ENCODE measurements at regions of chr19 and their contacts with region 1.

Region 1: DNA sequence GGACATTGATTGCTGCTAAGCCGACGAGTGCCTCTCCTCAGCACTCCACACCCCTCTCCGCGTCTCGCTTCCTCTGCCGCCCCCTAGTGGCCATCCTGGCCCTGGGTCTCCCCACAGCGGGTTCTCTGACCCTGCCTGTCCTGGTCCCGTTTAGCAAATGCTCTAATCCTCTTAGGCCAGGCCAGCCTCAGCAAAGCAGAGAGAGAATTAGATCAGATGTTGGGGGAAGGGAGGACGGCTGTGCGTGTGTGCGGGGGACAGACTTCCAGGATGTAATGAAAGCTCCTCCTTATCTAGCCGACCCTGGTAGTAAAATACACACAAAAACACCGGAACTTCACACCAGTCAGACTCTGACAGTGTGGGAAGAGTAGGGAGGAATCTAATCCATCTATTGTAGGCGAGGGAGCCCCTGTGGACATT is 4.5 kb downstream of the TPRX2 start:
- DNase-seq: peak; percentile 65
- H3K4me3 ChIP-seq: no peak overlapping the region
- H3K27ac ChIP-seq: no peak overlapping the region
- H3K4me1 ChIP-seq: no peaks in the 10 kb centered on the region
- H3K27me3 ChIP-seq: no peaks in the 10 kb centered on the region
- CTCF ChIP-seq: peak; percentile 92 to 97
- POLR2A ChIP-seq: no peak

Region 2: GRCh38 chr19:47704024-47704423 is 159.5 kb before region 1 on chr19:
- CTCF ChIA-PET with region 1: no interaction called
- POLR2A ChIA-PET with region 1: no interaction called
- dilution Hi-C with region 1: no loop called
- intact Hi-C with region 1: no loop called
- DNase-seq: no peak
- H3K4me3 ChIP-seq: no peak overlapping the region
- H3K27ac ChIP-seq: no peak overlapping the region
- H3K4me1 ChIP-seq: no peaks in the 10 kb centered on the region
- H3K27me3 ChIP-seq: no peaks in the 10 kb centered on the region
- CTCF ChIP-seq: no peak
- POLR2A ChIP-seq: no peak

Region 3: DNA sequence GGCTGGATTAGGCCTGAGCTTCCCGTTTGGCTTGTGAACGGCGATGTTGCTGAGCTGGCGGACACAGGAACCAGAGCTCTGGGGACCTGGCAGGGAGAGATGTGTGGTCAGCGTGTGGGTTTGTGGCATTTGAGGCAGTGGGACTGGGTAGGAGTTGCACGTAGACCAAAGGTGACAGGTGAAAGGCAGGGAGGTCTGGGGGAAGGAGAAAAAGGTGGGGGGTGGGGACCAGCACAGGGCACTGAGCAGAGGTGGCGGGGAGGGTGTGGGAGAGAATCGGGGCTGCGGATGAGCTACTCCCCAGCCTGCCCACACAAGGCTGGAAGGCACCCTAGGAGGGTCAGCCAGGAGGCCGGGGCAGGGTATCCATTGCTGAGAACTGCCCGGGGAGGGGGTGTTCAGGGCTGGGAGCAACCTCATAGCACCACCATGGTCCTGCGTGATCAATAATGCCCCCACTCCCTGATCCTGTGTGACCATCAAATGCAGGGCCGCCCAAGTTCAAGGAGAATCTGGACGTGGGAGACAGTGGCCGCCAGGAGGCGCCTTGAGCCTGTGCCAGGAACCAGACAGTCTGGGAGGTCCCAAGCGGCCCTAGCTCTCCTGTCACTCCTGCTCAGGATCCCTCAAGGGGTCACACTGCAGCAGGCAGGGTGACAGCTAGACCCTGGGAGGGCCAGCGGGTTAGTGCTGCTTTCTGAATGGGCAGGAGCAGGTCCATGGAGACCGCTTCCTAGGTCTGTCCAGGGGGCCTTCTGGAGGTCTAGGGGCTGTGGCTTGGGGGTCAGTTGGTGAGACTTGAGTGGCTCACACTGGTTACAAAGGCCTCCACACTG is 97.8 kb before region 1 on chr19:
- CTCF ChIA-PET with region 1: interaction called, 29 read pairs
- POLR2A ChIA-PET with region 1: no interaction called
- dilution Hi-C with region 1: no loop called
- intact Hi-C with region 1: no loop called
- DNase-seq: peak; percentile 58
- H3K4me3 ChIP-seq: no peak overlapping the region
- H3K27ac ChIP-seq: no peak overlapping the region
- H3K4me1 ChIP-seq: peaks cover 4% of the 10 kb centered on the region
- H3K27me3 ChIP-seq: peaks cover 0 to 2% of the 10 kb centered on the region in 2 experiments
- CTCF ChIP-seq: peak; percentile 79 to 93
- POLR2A ChIP-seq: no peak

Region 4: DNA sequence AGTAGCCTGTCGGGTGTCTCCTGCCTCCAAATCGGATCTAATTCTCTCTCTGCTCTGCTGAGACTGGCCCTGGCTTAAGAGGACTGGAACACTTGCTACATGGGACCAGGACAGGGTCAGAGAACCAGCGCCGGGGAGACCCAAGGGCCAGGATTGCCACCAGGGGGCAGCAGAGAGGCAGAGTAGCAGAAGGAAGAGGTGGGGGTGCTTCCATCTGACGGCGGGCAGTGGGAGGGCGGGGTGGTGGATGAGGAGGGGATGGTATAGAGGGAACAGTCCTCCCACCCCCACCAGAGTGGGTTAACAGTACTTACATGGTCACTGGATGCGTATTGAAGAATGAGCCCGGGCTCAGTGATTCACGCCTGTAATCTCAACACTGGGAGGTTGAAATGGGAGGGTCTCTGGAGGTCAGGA is 73.1 kb before region 1 on chr19:
- CTCF ChIA-PET with region 1: interaction called, 5 read pairs
- POLR2A ChIA-PET with region 1: no interaction called
- dilution Hi-C with region 1: no loop called
- intact Hi-C with region 1: loop called (anchors 1 kb)
- DNase-seq: peak; percentile 64
- H3K4me3 ChIP-seq: no peak overlapping the region
- H3K27ac ChIP-seq: no peak overlapping the region
- H3K4me1 ChIP-seq: no peaks in the 10 kb centered on the region
- H3K27me3 ChIP-seq: no peaks in the 10 kb centered on the region
- CTCF ChIP-seq: peak; percentile 75 to 90
- POLR2A ChIP-seq: no peak

Region 5: GRCh38 chr19:47813304-47814004 is 50.1 kb before region 1 on chr19:
- CTCF ChIA-PET with region 1: interaction called, 11 read pairs
- POLR2A ChIA-PET with region 1: no interaction called
- dilution Hi-C with region 1: no loop called
- intact Hi-C with region 1: loop called (anchors 1 kb)
- DNase-seq: peak; percentile 35
- H3K4me3 ChIP-seq: no peak overlapping the region
- H3K27ac ChIP-seq: no peak overlapping the region
- H3K4me1 ChIP-seq: no peaks in the 10 kb centered on the region
- H3K27me3 ChIP-seq: no peaks in the 10 kb centered on the region
- CTCF ChIP-seq: peak; percentile 32 to 73
- POLR2A ChIP-seq: no peak

Region 6: DNA sequence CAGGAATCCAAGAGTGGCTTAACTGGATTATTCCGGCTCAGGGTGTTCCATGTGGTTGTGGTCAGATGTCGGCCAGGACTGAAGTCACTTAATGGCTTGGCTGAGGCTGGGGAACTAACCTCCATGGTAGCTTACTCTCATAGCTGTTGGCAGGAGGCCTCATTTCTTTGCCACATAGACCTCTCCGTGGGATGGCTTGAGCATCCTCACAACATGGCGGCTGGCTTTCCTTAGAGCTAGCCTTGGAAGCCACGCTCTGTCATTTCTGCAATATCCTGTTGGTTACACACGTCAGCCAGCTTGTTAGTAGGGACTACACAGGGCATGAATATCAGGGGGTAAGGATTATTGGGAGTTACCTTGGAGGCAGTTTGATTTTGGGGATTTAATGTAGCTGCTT is 36.7 kb before region 1 on chr19:
- CTCF ChIA-PET with region 1: interaction called, 12 read pairs
- POLR2A ChIA-PET with region 1: no interaction called
- dilution Hi-C with region 1: no loop called
- intact Hi-C with region 1: no loop called
- DNase-seq: no peak
- H3K4me3 ChIP-seq: no peak overlapping the region
- H3K27ac ChIP-seq: no peak overlapping the region
- H3K4me1 ChIP-seq: no peaks in the 10 kb centered on the region
- H3K27me3 ChIP-seq: peaks cover 0 to 3% of the 10 kb centered on the region in 2 experiments
- CTCF ChIP-seq: no peak
- POLR2A ChIP-seq: no peak

Region 7: GRCh38 chr19:47848823-47849473 is 14.6 kb before region 1 on chr19:
- CTCF ChIA-PET with region 1: interaction called, 16 read pairs
- POLR2A ChIA-PET with region 1: interaction called, 3 read pairs
- dilution Hi-C with region 1: no loop called
- intact Hi-C with region 1: no loop called
- DNase-seq: no peak
- H3K4me3 ChIP-seq: no peak overlapping the region
- H3K27ac ChIP-seq: no peak overlapping the region
- H3K4me1 ChIP-seq: no peaks in the 10 kb centered on the region
- H3K27me3 ChIP-seq: peaks cover 9 to 19% of the 10 kb centered on the region in 2 experiments
- CTCF ChIP-seq: peak; percentile 29 to 38
- POLR2A ChIP-seq: no peak

Region 8: GRCh38 chr19:47881757-47882156 is 18.2 kb after region 1 on chr19:
- CTCF ChIA-PET with region 1: interaction called, 15 read pairs
- POLR2A ChIA-PET with region 1: no interaction called
- dilution Hi-C with region 1: no loop called
- intact Hi-C with region 1: no loop called
- DNase-seq: no peak
- H3K4me3 ChIP-seq: no peak overlapping the region
- H3K27ac ChIP-seq: no peak overlapping the region
- H3K4me1 ChIP-seq: no peaks in the 10 kb centered on the region
- H3K27me3 ChIP-seq: no peaks in the 10 kb centered on the region
- CTCF ChIP-seq: no peak
- POLR2A ChIP-seq: no peak

Measured in endothelial cell of umbilical vein (primary cell).